ENCODE measurements at regions of chr6 and their contacts with region 1.

Region 1: DNA sequence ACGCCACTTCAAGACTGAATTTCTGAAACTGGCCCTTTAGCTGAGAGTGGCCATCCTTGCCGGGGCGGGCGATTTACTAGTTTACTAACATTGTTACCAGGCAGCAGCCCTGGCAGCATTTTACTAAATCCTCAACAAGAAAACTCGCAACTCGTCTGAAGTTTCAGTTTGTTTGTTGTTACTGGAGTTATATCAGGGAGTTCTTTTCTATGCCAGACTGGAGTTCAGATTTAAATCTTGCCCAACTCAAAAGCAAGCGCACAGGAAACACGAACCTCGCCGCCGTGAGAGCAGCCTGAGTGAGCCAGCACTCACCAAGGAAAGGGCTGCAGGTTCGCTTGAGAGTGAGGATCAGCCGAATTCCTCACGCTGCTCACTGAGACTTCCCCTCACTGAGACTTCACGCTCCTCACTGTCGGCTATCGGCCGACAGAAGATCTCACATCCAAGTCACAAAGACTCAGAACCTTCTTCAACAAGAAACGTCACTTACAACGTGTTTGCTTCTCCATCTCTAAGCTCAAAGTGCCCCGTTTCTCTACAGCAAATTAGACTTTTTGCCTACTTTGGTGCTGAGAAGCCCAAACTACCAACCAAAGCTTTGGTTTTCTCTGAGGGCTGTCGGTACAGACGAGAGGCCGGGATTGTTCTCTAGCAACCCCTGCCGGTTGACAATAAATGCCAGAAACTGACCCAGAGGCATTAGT is 78.9 kb downstream of the OLIG3 start:
- DNase-seq: peak; percentile 38 to 76 (median 59)
- H3K4me3 ChIP-seq: peak overlapping the region; percentile 52
- H3K4me3 Mint-ChIP-seq: peak overlapping the region; percentile 84 to 93 (median 87)
- H3K27ac ChIP-seq: peak overlapping the region; percentile 18
- H3K27ac Mint-ChIP-seq: peak overlapping the region; percentile 56 to 98 (median 92)
- H3K4me1 ChIP-seq: peaks cover 10% of the 10 kb centered on the region
- H3K4me1 Mint-ChIP-seq: peaks cover 17 to 21% (median 20%) of the 10 kb centered on the region in 3 donors
- H3K27me3 ChIP-seq: no peaks in the 10 kb centered on the region
- H3K27me3 Mint-ChIP-seq: peaks cover 0 to 3% of the 10 kb centered on the region in 2 donors

Region 2: DNA sequence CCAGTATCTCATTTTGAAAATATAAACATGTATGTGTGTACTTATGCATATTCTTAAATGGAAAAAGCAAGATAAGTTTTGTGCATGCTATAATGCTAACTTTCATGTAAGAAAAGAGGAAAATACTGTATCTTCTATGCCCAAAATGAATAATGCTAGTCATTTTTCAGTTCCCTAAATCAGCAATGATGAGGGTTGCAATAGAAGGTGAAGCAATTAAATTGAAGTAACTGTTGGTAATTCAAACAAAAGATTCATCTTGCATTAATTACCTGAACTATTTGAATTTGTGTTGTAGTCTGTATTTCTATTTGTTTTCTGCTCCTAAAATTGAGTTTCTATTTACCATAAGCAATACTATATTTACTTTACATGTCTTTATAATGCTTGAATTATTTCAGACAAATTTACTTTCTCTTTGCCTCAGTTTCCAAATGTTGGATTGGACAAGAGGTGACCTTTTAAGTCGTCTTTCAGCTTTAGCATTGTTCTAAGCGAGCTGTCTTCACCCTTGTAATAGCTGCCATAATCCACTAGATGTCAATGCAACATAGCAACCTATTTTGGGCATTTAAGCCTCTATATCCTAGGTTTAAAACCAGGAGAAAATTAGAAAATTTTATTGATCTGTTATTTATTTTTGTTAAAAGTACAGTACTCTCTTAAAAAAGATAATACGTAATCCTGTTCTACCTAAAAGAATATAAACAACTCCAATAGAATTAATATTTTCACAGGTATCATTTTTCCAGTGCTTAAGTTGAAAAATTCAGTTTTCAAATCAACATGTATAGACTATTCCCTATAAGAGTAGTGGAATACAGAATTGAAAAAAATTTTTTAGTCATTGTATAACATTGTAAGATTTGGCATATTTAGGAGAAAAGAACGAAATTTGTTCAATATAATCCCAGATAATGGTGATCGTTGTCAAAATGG is 143.8 kb before region 1 on chr6:
- CTCF ChIA-PET with region 1: interaction called, 14 read pairs
- POLR2A ChIA-PET with region 1: interaction called, 3 read pairs
- DNase-seq: peak in 2 of 5 donors; percentile 18 to 25
- H3K4me3 ChIP-seq: no peak overlapping the region
- H3K4me3 Mint-ChIP-seq: no peak overlapping the region
- H3K27ac ChIP-seq: no peak overlapping the region
- H3K27ac Mint-ChIP-seq: peak overlapping the region in 3 of 8 donors; percentile 35 to 72 (median 43)
- H3K4me1 ChIP-seq: no peaks in the 10 kb centered on the region
- H3K4me1 Mint-ChIP-seq: peaks cover 29 to 41% (median 29%) of the 10 kb centered on the region in 3 donors
- H3K27me3 ChIP-seq: no peaks in the 10 kb centered on the region
- H3K27me3 Mint-ChIP-seq: no peaks in the 10 kb centered on the region

Region 3: GRCh38 chr6:137313928-137314855 is 101.1 kb before region 1 on chr6:
- CTCF ChIA-PET with region 1: interaction called, 11 read pairs
- POLR2A ChIA-PET with region 1: interaction called, 3 read pairs
- DNase-seq: peak; percentile 40 to 77 (median 59)
- H3K4me3 ChIP-seq: no peak overlapping the region
- H3K4me3 Mint-ChIP-seq: no peak overlapping the region
- H3K27ac ChIP-seq: no peak overlapping the region
- H3K27ac Mint-ChIP-seq: peak overlapping the region in 2 of 8 donors; percentile 8 to 29
- H3K4me1 ChIP-seq: no peaks in the 10 kb centered on the region
- H3K4me1 Mint-ChIP-seq: peaks cover 2 to 14% (median 9%) of the 10 kb centered on the region in 3 donors
- H3K27me3 ChIP-seq: no peaks in the 10 kb centered on the region
- H3K27me3 Mint-ChIP-seq: peaks cover 0 to 4% of the 10 kb centered on the region in 2 donors

Region 4: GRCh38 chr6:137341681-137342195 is 73.5 kb before region 1 on chr6:
- CTCF ChIA-PET with region 1: interaction called, 118 read pairs
- POLR2A ChIA-PET with region 1: interaction called, 6 read pairs
- DNase-seq: peak; percentile 40 to 78 (median 46)
- H3K4me3 ChIP-seq: no peak overlapping the region
- H3K4me3 Mint-ChIP-seq: peak overlapping the region; percentile 18 to 84 (median 80)
- H3K27ac ChIP-seq: no peak overlapping the region
- H3K27ac Mint-ChIP-seq: peak overlapping the region in 2 of 8 donors; percentile 8 to 20
- H3K4me1 ChIP-seq: peaks cover 9% of the 10 kb centered on the region
- H3K4me1 Mint-ChIP-seq: peaks cover 25 to 35% (median 32%) of the 10 kb centered on the region in 3 donors
- H3K27me3 ChIP-seq: no peaks in the 10 kb centered on the region
- H3K27me3 Mint-ChIP-seq: peaks cover 0 to 1% of the 10 kb centered on the region in 2 donors

Region 5: GRCh38 chr6:137399881-137400443 is 15.3 kb before region 1 on chr6:
- CTCF ChIA-PET with region 1: interaction called, 13 read pairs
- POLR2A ChIA-PET with region 1: interaction called, 5 read pairs
- DNase-seq: no peak
- H3K4me3 ChIP-seq: no peak overlapping the region
- H3K4me3 Mint-ChIP-seq: no peak overlapping the region
- H3K27ac ChIP-seq: no peak overlapping the region
- H3K27ac Mint-ChIP-seq: peak overlapping the region in 3 of 8 donors; percentile 6 to 80 (median 12)
- H3K4me1 ChIP-seq: no peaks in the 10 kb centered on the region
- H3K4me1 Mint-ChIP-seq: peaks cover 19 to 41% (median 27%) of the 10 kb centered on the region in 3 donors
- H3K27me3 ChIP-seq: no peaks in the 10 kb centered on the region
- H3K27me3 Mint-ChIP-seq: no peaks in the 10 kb centered on the region

Measured in CD8-positive, alpha-beta memory T cell (primary cell).